MCF 10A (cell line): ENCODE measurements at regions of chr15 and their contacts with region 1.

Region 1: DNA sequence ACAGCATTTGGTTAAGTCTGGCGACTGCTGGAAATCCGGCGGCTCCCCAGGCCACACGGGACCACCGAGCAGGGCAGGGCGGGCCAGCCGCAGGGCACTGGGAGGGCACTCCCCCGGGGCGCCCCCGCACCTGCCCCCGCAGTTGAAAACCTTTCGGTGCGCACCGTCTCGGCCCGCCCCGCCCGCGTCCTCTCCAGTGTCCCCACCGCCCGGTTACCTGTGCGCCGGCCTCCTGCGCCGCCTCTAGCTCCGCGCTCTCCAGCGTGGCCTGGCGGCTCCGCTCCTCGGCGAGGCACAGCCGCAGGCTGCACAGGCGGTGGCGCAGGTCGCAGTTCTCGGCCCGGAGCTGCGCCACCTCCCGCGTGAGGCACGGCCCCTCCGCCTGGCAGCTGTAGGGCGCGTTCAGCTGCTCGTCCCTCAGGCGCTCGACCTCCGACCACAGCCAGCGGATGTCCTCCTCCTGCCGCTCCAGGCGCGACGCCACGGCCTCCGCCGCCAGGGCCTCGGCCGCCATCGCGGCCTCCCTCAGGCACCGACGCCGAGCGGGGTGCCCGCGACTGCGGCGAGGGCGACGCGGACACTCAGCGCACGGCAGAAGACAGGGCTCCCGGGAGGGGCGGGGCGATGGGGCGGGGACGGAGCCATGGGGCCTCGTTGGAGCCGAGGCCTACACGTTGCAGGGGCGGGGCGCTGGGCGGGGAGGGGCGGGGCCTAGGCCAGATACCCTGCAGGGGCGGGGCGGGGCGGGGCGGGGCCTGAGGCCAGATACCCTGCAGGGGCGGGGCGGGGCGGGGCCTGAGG is at the start of gene TARS3:
- DNase-seq: peak; percentile 92
- H3K4me3 Mint-ChIP-seq: peak within 1 kb of the TSS; percentile 75
- H3K27ac Mint-ChIP-seq: peak within 1 kb of the TSS; percentile 46
- H3K4me1 Mint-ChIP-seq: peaks cover 4% of the 10 kb centered on the region
- H3K27me3 Mint-ChIP-seq: peaks cover 21% of the 10 kb centered on the region
- CTCF ChIP-seq: no peak
- total RNA-seq, gene TARS3: 5.0 and 7.2 TPM in 2 replicates

Region 2: DNA sequence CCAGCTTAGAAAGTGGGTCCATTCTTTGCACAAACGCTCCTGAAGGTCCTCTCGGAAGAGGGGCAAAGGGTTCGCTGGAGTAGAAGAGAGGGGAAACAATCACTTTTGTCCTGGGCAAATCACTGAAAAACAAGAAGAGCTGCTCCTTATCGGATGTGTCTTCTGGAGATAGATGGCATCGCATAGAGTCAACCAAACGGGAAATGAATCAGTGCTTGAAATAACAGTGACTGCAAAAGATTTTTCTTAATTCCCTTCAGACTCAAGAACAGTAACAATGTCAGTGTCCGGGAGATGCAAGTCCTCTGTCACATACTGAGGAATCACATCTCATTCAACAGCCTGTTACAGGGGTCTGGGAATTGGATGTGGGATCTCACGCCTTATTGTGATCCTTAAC is 155.8 kb before region 1 on chr15:
- CTCF ChIA-PET with region 1: no interaction called
- POLR2A ChIA-PET with region 1: no interaction called
- intact Hi-C with region 1: no loop called
- DNase-seq: no peak
- H3K4me3 Mint-ChIP-seq: no peak overlapping the region
- H3K27ac Mint-ChIP-seq: no peak overlapping the region
- H3K4me1 Mint-ChIP-seq: peaks cover 6% of the 10 kb centered on the region
- H3K27me3 Mint-ChIP-seq: no peaks in the 10 kb centered on the region
- CTCF ChIP-seq: no peak

Region 3: DNA sequence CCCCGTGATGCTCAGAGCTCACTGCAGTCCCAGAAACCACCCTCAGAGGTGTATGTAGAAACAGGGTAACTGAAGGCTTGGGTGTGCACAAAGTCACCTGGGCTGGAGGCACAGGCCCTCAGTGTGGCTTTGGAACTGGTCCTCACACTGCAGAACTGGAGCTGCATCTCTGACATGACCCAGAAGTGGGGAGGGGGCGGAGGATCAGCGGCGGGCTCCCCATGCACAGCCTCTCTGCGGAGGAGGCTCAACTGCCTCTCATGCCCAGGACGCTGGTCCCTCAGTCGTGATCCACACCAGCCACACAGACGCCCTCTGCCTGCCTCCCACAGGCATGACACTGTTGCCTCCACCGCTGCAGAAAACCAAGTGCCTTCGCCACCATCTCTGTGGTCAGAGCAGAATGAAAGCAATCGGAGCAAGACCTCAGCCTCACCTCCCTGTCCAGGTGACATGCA is 145.6 kb before region 1 on chr15:
- CTCF ChIA-PET with region 1: no interaction called
- POLR2A ChIA-PET with region 1: no interaction called
- intact Hi-C with region 1: no loop called
- DNase-seq: peak; percentile 26
- H3K4me3 Mint-ChIP-seq: no peak overlapping the region
- H3K27ac Mint-ChIP-seq: no peak overlapping the region
- H3K4me1 Mint-ChIP-seq: peaks cover 34% of the 10 kb centered on the region
- H3K27me3 Mint-ChIP-seq: no peaks in the 10 kb centered on the region
- CTCF ChIP-seq: no peak

Region 4: DNA sequence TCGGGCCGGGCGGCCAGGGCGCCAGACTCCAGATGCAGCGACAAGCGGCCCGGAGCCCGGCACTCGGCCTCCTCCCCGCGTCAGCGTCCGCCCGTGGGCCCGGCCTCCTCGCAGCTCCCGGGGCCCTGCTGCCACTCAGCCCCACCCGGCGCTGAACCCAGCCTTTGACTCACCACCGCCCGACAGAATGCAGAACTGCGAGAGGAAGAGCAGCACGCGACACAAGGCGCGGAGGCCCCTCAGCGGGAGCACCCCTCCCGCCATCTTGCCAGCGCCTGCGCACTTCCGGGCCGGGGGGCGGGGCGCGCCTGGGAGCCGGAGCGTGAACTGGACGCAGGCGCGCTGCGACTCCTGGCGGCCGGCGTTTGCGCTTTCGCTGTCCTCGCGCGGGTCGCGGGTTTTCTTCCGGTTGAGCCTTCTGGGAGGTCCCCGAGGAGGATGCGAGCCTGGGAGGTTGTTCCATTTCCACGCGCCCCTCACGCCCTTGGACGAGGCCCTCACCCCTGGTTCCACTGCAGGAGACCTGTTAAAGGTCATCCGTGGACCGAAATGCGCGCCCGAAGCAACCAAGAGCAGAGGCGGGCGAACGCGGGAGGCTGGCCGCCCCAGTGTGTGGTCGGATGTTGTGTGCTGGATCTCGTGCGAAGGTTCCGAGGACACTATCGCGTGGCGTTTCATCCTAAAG is 71.8 kb before region 1 on chr15 and contains the start of gene TM2D3:
- CTCF ChIA-PET with region 1: interaction called, 4 read pairs
- POLR2A ChIA-PET with region 1: interaction called, 3 read pairs
- intact Hi-C with region 1: loop called (anchors 1 kb)
- DNase-seq: peak; percentile 90
- H3K4me3 Mint-ChIP-seq: peak within 1 kb of the TSS; percentile 71
- H3K27ac Mint-ChIP-seq: peak within 1 kb of the TSS; percentile 60
- H3K4me1 Mint-ChIP-seq: no peaks in the 10 kb centered on the region
- H3K27me3 Mint-ChIP-seq: no peaks in the 10 kb centered on the region
- CTCF ChIP-seq: peak; percentile 71
- total RNA-seq, gene TM2D3: 25.7 and 26.2 TPM in 2 replicates

Region 5: DNA sequence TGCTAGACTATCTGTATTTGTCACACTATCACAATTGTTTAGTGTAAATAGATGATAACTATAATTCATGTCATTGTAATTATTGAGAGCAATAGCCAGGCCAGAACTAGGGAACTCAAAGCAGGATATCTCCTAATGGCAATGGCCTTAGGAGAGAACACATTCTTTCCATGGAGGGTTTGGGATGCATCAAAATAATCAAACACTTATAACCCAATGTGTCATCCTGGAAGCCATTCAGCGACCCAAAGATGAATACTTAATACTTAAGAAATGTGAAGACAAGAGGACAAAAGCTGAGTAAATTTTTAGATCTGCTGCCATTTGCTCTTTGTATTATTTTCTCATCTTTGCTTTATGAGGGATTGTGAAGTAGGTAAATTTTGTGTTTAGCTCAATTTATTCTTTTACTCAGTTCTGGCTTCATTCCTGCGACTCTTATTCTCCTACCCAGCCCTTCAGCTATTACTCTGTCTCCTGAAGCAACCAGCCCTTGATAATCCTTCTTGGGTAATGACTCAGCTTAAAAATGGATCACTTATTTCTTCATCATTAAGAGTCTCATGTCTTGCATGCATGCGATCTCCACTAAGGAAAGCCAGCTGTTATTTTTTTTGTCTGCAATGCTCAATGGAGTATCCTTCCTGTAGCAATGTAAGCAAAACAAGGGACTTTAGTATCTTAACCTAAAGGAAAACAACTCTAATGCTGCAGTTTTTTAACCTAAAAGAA is 89.9 kb after region 1 on chr15:
- CTCF ChIA-PET with region 1: no interaction called
- POLR2A ChIA-PET with region 1: no interaction called
- intact Hi-C with region 1: no loop called
- DNase-seq: no peak
- H3K4me3 Mint-ChIP-seq: no peak overlapping the region
- H3K27ac Mint-ChIP-seq: no peak overlapping the region
- H3K4me1 Mint-ChIP-seq: no peaks in the 10 kb centered on the region
- H3K27me3 Mint-ChIP-seq: peaks cover 88% of the 10 kb centered on the region
- CTCF ChIP-seq: no peak